Heart left ventricle (tissue), 16 donors: ENCODE measurements at regions of chrX and their contacts with region 1.

Region 1: GRCh38 chrX:24879679-24880078 is 136.1 kb downstream of the ARX start:
- DNase-seq: no peak
- ATAC-seq: no peak
- H3K4me3 ChIP-seq: no peak overlapping the region
- H3K27ac ChIP-seq: no peak overlapping the region
- H3K4me1 ChIP-seq: no peaks in the 10 kb centered on the region
- H3K27me3 ChIP-seq: peaks cover 0 to 4% (median 0%) of the 10 kb centered on the region in 9 donors
- CTCF ChIP-seq: no peak
- POLR2A ChIP-seq: no peak

Region 2: GRCh38 chrX:24702362-24703184 is 177.1 kb before region 1 on chrX:
- intact Hi-C with region 1: no loop called
- DNase-seq: no peak
- ATAC-seq: no peak
- H3K4me3 ChIP-seq: no peak overlapping the region
- H3K27ac ChIP-seq: no peak overlapping the region
- H3K4me1 ChIP-seq: no peaks in the 10 kb centered on the region
- H3K27me3 ChIP-seq: peaks cover 0 to 3% (median 0%) of the 10 kb centered on the region in 9 donors
- CTCF ChIP-seq: no peak
- POLR2A ChIP-seq: no peak

Region 3: DNA sequence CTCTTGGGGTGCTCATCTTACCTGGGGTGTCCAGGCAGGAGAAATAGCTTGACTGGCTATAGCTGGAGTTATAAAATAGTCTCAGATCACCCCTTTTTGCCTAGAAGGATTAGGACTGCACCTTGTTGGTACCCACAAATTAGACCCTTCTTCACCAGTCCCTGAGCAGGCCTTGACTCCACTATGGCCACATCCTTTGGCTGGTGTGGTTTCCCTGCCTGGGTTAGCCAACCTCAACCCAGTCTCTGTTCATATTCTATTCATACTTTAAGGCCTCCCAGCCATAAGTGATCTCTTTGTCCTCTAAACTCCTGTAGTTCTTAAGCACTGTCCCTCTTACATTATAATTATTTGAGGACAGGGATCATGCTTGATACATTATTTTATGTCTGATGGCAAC is 66.7 kb after region 1 on chrX:
- intact Hi-C with region 1: loop called in 1 of 10 experiments (anchors 10 kb)
- DNase-seq: no peak
- ATAC-seq: no peak
- H3K4me3 ChIP-seq: no peak overlapping the region
- H3K27ac ChIP-seq: no peak overlapping the region
- H3K4me1 ChIP-seq: no peaks in the 10 kb centered on the region
- H3K27me3 ChIP-seq: no peaks in the 10 kb centered on the region
- CTCF ChIP-seq: no peak
- POLR2A ChIP-seq: no peak

Region 4: DNA sequence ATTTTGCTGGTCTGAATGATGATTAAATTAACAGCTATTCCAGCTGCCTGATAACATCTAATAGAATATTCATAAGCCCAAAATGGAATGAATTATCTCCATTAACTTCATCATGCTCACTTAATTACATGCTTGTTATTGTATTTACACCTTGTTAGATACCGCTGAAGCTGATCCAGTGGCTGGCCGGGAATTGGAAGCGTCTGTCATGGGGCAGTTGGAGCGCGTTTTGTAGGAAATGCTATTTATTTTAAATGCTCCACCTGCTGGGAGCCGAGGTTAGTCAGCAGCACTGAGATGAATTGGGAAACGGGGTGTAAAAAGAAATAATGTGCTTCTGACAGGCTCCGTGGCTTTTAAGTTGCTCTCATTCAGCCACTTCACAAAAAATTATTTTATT is 110.9 kb after region 1 on chrX:
- intact Hi-C with region 1: no loop called
- DNase-seq: no peak
- ATAC-seq: no peak
- H3K4me3 ChIP-seq: no peak overlapping the region
- H3K27ac ChIP-seq: no peak overlapping the region
- H3K4me1 ChIP-seq: no peaks in the 10 kb centered on the region
- H3K27me3 ChIP-seq: peaks cover 0 to 20% (median 0%) of the 10 kb centered on the region in 9 donors
- CTCF ChIP-seq: no peak
- POLR2A ChIP-seq: no peak